Kidney (tissue), 22 donors: ENCODE measurements at regions of chr11 and their contacts with region 1.

Region 1: DNA sequence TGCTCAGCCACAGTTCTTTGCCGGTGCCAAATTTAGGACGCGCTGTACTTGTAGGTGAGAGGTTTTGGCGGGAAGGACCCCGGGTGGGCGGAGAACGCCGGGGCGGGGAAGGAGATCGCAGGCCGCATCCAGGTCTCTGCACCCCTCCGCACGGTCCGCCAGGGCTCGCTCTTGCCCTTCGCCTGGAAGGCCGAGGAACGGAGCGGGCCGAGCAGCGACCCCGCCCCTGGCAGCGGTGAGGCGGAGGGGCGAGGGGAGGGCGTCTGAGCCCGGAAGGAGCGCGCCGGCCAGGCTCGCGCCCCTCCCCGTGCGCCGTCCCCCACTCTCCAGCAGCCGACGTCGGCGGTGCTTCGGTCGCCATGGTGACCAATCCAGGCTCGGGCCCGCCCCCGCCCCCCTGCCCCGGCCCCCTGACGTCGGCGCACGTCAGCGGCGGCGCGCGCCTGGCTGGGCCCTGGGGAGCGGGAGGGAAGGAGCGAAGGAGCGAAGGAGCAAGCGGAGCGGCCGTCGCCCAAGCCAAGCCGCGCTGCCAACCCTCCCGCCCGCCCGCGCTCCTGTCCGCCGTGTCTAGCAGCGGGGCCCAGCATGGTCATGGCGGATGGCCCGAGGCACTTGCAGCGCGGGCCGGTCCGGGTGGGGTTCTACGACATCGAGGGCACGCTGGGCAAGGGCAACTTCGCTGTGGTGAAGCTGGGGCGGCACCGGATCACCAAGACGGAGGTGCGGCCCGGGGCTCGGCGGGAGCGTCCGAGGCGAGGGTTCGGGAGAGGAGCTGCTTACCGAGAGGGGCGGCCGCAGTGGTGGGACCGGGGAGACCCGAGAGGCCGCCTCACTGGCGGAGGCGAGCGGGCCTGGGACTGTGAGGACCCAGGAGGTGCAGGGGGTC is at the start of gene SIK2:
- DNase-seq: peak; percentile 98 to 99 (median 99)
- H3K4me3 ChIP-seq: peak within 1 kb of the TSS; percentile 79 to 95 (median 91)
- H3K27ac ChIP-seq: peak within 1 kb of the TSS; percentile 96 to 98
- H3K4me1 ChIP-seq: peaks cover 0 to 6% (median 3%) of the 10 kb centered on the region in 3 donors
- H3K27me3 ChIP-seq: no peaks in the 10 kb centered on the region
- CTCF ChIP-seq: peak; percentile 95
- total RNA-seq, gene SIK2: 40.1 TPM

Region 2: DNA sequence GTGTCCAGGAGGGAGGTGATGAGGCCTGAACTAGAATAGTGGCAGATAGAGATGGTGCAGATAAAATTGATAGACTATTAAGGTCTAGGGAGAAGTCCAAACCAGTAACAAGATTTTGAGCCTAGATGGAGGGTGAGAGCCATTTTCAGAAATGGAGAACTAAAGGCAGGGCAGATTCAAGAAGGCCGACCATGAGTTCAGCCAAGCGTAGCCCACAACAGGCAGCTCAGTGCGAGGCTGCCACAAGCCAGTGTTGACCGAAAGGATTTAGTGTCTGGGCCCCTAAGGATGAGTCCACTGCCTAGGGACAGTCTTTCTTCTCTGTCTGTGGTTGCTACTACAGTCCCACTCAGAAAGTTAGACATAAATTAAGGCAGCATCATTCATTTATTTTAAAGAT is 112.3 kb after region 1 on chr11:
- intact Hi-C with region 1: no loop called
- DNase-seq: no peak
- H3K4me3 ChIP-seq: no peak overlapping the region
- H3K27ac ChIP-seq: no peak overlapping the region
- H3K4me1 ChIP-seq: peaks cover 0 to 9% (median 7%) of the 10 kb centered on the region in 3 donors
- H3K27me3 ChIP-seq: no peaks in the 10 kb centered on the region
- CTCF ChIP-seq: no peak

Region 3: DNA sequence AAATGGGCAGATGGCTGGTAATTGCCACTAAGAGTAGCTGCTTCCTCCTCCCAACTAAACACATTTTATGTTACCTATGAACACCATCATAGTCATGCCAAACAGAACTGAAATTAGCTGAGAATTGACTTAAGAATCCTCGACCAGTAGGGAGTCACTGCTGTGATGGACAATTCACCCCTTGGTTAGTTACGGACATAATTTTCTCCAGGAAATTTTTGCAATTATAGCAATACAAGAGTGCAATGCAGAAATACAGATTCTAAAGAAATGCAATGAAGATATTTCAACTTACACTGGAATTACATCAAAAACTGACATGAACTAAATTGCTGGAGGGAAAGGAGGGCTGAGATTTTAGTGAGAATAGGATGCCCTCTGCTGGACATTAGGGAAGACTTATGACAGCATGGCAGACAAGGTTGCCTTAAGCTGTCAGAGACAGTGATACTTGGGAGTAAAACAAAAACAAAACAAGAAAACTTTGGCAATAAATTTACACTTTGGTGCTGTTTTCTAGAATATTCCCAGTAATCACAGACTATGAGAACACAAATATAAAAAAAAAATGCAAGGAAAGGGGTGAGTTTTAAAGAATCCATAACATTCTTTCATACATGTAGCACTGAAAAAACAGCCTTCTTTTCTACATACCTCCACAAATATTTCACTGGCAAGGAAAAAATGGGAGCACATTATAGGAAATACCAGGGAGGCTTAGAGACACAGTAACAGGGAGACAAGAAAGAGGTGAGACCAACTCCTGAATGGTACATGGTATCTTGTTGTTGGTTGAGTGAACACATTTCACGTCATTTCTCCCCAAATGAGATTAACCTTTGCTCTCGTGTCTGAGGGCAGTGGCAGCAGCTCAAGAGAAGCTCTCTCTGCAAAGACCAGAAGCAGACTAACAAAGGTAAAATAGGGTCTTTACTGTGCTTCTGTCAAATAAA is 175.1 kb after region 1 on chr11:
- intact Hi-C with region 1: loop called (anchors 5 kb)
- DNase-seq: peak in 3 of 5 donors; percentile 11 to 89 (median 84)
- H3K4me3 ChIP-seq: no peak overlapping the region
- H3K27ac ChIP-seq: peak overlapping the region; percentile 54 to 68
- H3K4me1 ChIP-seq: peaks cover 0 to 33% (median 5%) of the 10 kb centered on the region in 3 donors
- H3K27me3 ChIP-seq: no peaks in the 10 kb centered on the region
- CTCF ChIP-seq: peak; percentile 83

Region 4: GRCh38 chr11:111841370-111842053 is 239.3 kb after region 1 on chr11:
- intact Hi-C with region 1: loop called (anchors 10 kb)
- DNase-seq: peak; percentile 84 to 91 (median 86)
- H3K4me3 ChIP-seq: no peak overlapping the region
- H3K27ac ChIP-seq: no peak overlapping the region
- H3K4me1 ChIP-seq: peaks cover 0 to 8% (median 4%) of the 10 kb centered on the region in 3 donors
- H3K27me3 ChIP-seq: no peaks in the 10 kb centered on the region
- CTCF ChIP-seq: peak; percentile 98